ENCODE measurements at regions of chr7 and their contacts with region 1.

Region 1: GRCh38 chr7:155371884-155372781 is 74.5 kb downstream of the INSIG1 start:
- DNase-seq: no peak
- ATAC-seq: no peak; the same call in 1 of the 2 replicates
- H3K4me3 ChIP-seq: no peak overlapping the region
- H3K27ac ChIP-seq: no peak overlapping the region
- H3K4me1 ChIP-seq: peaks cover 2% of the 10 kb centered on the region; the same call in 1 of the 2 replicates
- H3K27me3 ChIP-seq: peaks cover 65% of the 10 kb centered on the region
- CTCF ChIP-seq: peak; percentile 29; the same call in 1 of the 2 replicates
- POLR2A ChIP-seq: no peak
- RAD21 ChIP-seq: no peak

Region 2: GRCh38 chr7:155003376-155004214 is 368.5 kb before region 1 on chr7:
- CTCF ChIA-PET with region 1: no interaction called
- POLR2A ChIA-PET with region 1: no interaction called
- dilution Hi-C with region 1: no loop called
- in situ Hi-C with region 1: no loop called
- intact Hi-C with region 1: loop called (anchors 10 kb)
- DNase-seq: peak; percentile 71
- ATAC-seq: peak; percentile 94
- H3K4me3 ChIP-seq: peak overlapping the region; percentile 80
- H3K27ac ChIP-seq: peak overlapping the region; percentile 81
- H3K4me1 ChIP-seq: 0 out of 2 replicates have a peak, but pooled peaks cover 1% of the 10 kb centered on the region
- H3K27me3 ChIP-seq: no peaks in the 10 kb centered on the region
- CTCF ChIP-seq: no peak
- POLR2A ChIP-seq: no peak; the same call in 1 of the 2 replicates
- RAD21 ChIP-seq: no peak

Region 3: GRCh38 chr7:155456738-155457564 is 84.8 kb after region 1 on chr7:
- CTCF ChIA-PET with region 1: no interaction called
- POLR2A ChIA-PET with region 1: no interaction called
- dilution Hi-C with region 1: no loop called
- in situ Hi-C with region 1: no loop called
- intact Hi-C with region 1: loop called (anchors 10 kb)
- DNase-seq: peak; percentile 31
- ATAC-seq: peak; percentile 69
- H3K4me3 ChIP-seq: peak overlapping the region; percentile 34
- H3K27ac ChIP-seq: no peak overlapping the region
- H3K4me1 ChIP-seq: no peaks in the 10 kb centered on the region
- H3K27me3 ChIP-seq: peaks cover 90% of the 10 kb centered on the region
- CTCF ChIP-seq: no peak
- POLR2A ChIP-seq: no peak
- RAD21 ChIP-seq: no peak

Measured in IMR-90 (cell line).